Esophagus muscularis mucosa (tissue), 4 donors: ENCODE measurements at regions of chr7 and their contacts with region 1.

Region 1: DNA sequence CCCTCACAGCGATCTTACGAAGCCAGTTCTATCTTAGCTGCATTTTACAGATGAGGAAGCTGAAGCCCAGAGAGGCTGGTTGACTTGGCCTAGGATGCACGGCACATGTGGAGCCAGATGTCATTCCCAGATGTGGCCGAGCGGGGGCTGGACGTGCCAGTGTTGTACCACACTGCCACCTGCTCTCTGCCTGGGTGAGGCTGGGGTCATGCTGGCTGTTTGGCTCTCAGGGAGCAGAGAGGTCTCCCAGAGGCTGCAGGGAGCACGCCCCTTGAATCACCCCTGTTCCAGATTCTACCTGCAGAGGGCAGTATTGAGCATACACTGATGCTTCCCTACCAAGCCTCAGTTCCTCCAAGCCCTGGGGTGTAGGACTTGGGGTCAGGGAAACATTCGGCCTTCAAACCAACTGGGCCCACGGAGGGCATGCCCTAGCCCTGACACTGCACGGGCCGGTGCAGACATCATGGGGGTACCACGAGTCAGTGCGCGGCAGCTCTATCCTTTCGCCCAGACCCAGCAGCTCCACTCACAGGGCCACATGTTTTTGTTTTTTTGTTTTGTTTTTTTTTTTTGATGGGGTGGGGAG is 3.8 kb upstream of the GTF2IRD1 start:
- DNase-seq: no peak
- H3K4me3 ChIP-seq: no peak overlapping the region
- H3K27ac ChIP-seq: no peak overlapping the region
- H3K4me1 ChIP-seq: peaks cover 9 to 27% (median 21%) of the 10 kb centered on the region in 4 donors
- H3K27me3 ChIP-seq: no peaks in the 10 kb centered on the region
- CTCF ChIP-seq: peak; percentile 86 to 92 (median 90)
- EP300 ChIP-seq: no peak
- POLR2A ChIP-seq: no peak

Region 2: DNA sequence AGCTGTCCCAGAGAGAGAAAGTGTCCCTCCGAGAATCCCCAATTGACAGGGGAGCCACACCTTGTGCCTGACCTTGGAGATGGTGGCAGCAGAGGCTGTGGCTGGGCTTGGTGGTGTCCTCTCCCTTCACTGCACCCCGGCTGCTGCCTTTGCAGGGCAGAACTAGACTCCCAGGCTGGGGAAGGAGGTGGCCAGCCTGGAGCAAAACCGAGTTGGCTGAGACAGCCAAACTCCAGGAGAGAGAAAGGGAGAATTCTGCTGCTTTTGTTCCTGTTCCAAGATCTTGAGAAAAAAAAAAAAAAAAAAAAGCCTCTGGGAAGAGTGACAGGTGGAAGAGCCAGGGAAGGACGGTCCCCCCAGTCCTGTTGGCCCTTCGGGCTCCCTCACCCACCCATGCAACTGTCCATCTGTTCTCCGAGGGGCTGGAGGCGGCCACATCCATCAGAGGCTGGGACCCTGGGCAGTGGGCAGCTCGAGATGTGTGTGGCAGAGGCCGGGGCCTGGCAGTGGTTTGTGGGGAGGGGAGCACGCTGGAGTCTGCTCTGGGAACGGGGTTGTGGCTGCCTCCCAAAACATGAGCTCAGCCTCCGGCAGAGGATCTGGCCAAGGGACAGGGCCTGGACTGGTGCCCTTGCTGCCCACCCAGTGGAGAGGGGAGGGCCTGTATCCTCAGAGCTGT is 125.2 kb before region 1 on chr7:
- intact Hi-C with region 1: no loop called
- DNase-seq: no peak
- H3K4me3 ChIP-seq: no peak overlapping the region
- H3K27ac ChIP-seq: no peak overlapping the region
- H3K4me1 ChIP-seq: peaks cover 0 to 17% (median 14%) of the 10 kb centered on the region in 4 donors
- H3K27me3 ChIP-seq: no peaks in the 10 kb centered on the region
- CTCF ChIP-seq: no peak
- EP300 ChIP-seq: no peak
- POLR2A ChIP-seq: no peak

Region 3: GRCh38 chr7:74479961-74480829 is 30.3 kb after region 1 on chr7:
- intact Hi-C with region 1: loop called (anchors 2 kb)
- DNase-seq: no peak
- H3K4me3 ChIP-seq: peak overlapping the region; percentile 47 to 55 (median 52)
- H3K27ac ChIP-seq: peak overlapping the region; percentile 92 to 97 (median 96)
- H3K4me1 ChIP-seq: peaks cover 72 to 94% (median 93%) of the 10 kb centered on the region in 4 donors
- H3K27me3 ChIP-seq: no peaks in the 10 kb centered on the region
- CTCF ChIP-seq: peak in 2 of 3 experiments; percentile 5 to 19
- EP300 ChIP-seq: peak; percentile 80
- POLR2A ChIP-seq: peak; percentile 28

Region 4: DNA sequence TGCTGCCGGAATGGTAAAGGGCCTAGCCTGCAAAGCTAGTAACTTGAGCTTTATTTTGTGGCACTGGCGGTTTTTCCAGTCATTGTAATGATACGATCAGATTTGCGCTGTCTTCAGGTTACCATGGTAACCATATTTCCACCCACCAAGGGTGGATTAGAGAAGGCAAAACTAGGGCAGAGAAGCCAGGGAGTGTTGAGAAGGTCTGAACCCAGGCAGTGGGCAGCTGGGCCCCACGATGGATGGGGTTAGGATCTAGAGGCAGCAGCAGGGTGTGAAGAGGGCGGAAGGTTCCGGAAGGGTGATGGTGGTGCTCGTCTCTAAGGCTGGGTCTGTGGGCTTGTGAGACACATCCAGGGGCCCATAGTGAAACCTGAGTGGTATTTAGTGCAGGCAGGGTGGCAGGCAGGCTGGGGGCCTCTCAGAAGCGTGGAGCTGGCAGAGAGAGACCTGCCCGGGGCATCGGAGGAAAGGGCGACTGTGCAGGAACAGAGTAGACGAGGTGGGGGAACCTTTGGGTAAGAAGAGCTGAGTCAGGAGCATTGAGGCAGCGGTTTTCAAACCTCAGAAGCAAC is 119.7 kb after region 1 on chr7:
- intact Hi-C with region 1: loop called (anchors 10 kb)
- DNase-seq: no peak
- H3K4me3 ChIP-seq: no peak overlapping the region
- H3K27ac ChIP-seq: no peak overlapping the region
- H3K4me1 ChIP-seq: no peaks in the 10 kb centered on the region
- H3K27me3 ChIP-seq: no peaks in the 10 kb centered on the region
- CTCF ChIP-seq: no peak
- EP300 ChIP-seq: no peak
- POLR2A ChIP-seq: no peak